Activated T-helper 1 cell treated with anti-CD3 and anti-CD28 coated beads, Interleukin-12 subunit alpha, Interleukin-12 subunit beta, Interleukin-2, Interleukin-4 antibody, amounts not matched to agents 30 ng/mL and 10 ng/mL and 1 ng/mL, durations not matched to agents 14 hours and 24 hours and 36 hours (primary cell): ENCODE measurements at regions of chr6 and their contacts with region 1.

Region 1: DNA sequence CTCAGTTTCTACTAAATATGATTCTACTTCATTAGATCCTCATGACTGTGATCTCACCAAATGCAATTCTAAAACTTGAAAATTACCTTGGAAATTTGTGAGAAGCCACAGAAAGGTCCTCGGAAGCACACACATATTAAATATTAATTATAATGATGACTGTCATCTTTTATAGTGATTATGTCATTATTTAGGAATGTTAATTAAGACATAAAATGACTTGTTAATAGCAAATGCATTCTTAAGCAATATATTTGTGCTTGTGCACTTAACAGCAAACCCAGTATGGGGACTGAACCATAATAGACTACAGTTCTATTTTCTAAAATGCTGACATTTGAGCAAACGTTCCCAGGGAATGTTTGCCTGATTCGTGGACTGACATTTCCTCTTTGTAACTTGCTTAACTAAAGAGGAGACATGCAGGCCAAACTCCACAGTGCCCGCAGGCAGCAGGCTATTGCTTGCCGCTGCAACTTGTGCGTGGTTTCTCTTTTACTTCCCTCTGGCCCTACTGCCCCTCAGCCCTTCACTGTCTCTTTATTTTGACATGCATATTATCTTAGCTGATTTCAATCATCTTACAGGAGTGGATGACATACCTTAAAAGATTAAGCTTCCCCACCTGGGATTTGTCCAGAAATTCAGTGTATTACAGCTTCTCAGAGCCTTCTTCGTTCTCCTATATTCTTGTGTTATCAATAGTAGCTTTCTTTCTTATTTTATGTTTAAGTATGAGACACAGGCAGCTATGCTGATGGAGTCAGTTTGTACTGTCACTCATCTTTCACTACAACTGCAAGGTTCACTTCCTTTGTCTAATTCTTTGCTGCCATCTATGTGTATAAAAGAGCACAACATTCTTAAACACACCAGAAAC is 141.5 kb downstream of the GMDS start:
- DNase-seq: no peak
- H3K4me3 Mint-ChIP-seq: no peak overlapping the region
- H3K27ac Mint-ChIP-seq: no peak overlapping the region
- H3K4me1 Mint-ChIP-seq: peaks cover 6% of the 10 kb centered on the region
- H3K27me3 Mint-ChIP-seq: peaks cover 2% of the 10 kb centered on the region

Region 2: DNA sequence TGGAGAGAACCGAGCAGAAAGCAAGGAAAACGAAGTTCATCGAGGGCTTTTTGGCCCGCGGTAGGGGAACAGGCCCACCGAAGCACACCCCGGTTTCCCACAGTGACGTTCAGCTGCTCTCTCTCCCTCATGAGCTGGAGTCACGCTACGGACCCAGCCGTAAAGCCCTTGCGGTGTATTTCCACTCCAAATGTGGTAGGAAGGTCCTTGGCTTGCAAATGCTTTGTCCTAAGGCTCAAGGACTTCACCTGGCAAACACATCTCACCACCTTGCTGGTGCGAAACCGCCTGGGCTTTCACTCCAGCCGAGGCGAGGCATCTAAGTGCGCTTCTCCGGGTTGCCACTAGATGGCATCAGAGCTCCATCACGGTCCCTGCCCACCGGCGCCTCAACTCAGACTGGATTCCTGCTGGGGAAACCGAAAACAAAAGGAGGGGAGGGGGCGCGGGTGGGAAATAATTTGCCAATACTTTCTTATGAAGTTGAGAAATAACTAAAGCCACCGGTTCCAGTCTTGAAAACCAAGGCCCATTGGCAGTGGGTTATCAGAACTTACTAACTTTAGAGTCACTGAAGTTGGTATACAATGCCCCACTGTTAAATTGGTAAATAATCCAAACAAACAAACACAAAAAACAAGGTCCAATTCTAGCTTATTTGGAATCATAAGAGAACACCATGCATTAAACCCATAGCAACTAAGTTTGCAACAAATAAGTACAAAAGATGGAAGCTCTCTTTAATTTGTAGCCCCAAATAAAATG is 507.6 kb before region 1 on chr6:
- intact Hi-C with region 1: loop called (anchors 2 kb)
- DNase-seq: peak; percentile 50
- H3K4me3 Mint-ChIP-seq: no peak overlapping the region
- H3K27ac Mint-ChIP-seq: no peak overlapping the region
- H3K4me1 Mint-ChIP-seq: peaks cover 4% of the 10 kb centered on the region
- H3K27me3 Mint-ChIP-seq: peaks cover 55% of the 10 kb centered on the region

Region 3: DNA sequence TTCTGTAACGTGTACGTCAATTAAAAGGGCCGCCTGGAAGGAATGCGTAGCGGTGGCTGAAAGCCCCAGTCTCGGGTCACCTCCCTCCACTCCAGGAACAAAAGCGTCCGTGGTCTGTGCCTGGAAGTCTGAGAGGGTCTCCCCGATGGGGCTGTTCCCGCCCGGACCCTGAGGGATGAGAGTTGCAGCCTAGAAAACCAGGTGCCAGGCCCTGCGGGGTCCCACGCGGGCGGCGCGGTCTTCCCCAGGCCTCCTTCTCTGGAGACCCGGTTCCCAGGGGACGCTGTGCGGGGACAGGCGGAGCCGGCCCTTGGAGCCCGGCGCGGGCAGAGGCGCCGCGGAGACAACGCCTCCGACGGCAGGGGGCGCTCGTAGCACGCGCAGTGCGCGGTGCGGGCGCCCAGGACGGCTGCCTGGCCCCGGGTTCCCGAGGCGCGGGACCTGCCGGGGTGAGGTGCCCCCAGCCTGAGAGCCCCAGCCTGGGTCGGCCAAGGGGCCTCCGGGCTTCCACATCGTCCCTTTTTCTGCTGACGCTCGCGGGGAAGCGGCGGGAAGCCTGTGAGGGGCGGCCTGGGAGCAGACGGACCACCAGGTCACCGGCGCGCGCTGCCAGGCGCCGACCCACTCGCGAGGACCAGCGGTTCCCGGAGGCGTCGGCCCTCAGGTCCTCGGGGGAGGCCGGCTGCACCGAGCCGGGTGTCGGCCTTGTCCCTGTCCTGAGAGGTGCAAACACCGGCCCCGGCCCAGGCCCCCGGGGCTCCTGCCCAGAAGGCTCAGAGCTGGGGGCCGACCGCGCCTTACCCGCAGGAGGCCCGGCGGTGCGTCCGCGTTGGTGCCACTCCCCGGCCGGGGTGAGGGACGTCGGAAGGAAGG is 499.5 kb before region 1 on chr6:
- intact Hi-C with region 1: loop called (anchors 1 kb)
- DNase-seq: peak; percentile 37
- H3K4me3 Mint-ChIP-seq: no peak overlapping the region
- H3K27ac Mint-ChIP-seq: no peak overlapping the region
- H3K4me1 Mint-ChIP-seq: peaks cover 13% of the 10 kb centered on the region
- H3K27me3 Mint-ChIP-seq: peaks cover 84% of the 10 kb centered on the region

Region 4: DNA sequence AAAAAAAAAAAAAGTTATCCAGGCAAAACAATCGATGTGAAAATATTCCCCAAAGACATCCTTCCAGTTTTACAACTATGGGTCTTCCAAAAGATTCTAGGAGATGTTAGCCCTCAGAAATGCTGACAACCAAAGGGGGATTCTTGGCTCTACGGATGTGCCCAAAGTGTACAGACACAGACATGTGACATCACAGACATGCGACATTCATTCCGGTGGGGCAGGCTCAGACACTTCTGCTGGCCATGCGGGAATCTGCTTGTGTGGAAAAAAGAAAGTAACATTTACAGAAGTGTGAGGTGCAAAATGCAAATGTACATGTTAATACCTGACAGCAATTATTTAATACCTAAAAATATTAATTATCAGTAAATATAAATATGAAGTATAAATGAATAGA is 225.6 kb before region 1 on chr6:
- intact Hi-C with region 1: no loop called
- DNase-seq: no peak
- H3K4me3 Mint-ChIP-seq: no peak overlapping the region
- H3K27ac Mint-ChIP-seq: no peak overlapping the region
- H3K4me1 Mint-ChIP-seq: no peaks in the 10 kb centered on the region
- H3K27me3 Mint-ChIP-seq: peaks cover 6% of the 10 kb centered on the region

Region 5: GRCh38 chr6:1893470-1894130 is 210.3 kb before region 1 on chr6:
- intact Hi-C with region 1: loop called (anchors 1 kb)
- DNase-seq: no peak
- H3K4me3 Mint-ChIP-seq: no peak overlapping the region
- H3K27ac Mint-ChIP-seq: no peak overlapping the region
- H3K4me1 Mint-ChIP-seq: peaks cover 12% of the 10 kb centered on the region
- H3K27me3 Mint-ChIP-seq: no peaks in the 10 kb centered on the region

Region 6: GRCh38 chr6:2376429-2377355 is 272.8 kb after region 1 on chr6:
- intact Hi-C with region 1: no loop called
- DNase-seq: no peak
- H3K4me3 Mint-ChIP-seq: no peak overlapping the region
- H3K27ac Mint-ChIP-seq: no peak overlapping the region
- H3K4me1 Mint-ChIP-seq: peaks cover 5% of the 10 kb centered on the region
- H3K27me3 Mint-ChIP-seq: no peaks in the 10 kb centered on the region

Region 7: DNA sequence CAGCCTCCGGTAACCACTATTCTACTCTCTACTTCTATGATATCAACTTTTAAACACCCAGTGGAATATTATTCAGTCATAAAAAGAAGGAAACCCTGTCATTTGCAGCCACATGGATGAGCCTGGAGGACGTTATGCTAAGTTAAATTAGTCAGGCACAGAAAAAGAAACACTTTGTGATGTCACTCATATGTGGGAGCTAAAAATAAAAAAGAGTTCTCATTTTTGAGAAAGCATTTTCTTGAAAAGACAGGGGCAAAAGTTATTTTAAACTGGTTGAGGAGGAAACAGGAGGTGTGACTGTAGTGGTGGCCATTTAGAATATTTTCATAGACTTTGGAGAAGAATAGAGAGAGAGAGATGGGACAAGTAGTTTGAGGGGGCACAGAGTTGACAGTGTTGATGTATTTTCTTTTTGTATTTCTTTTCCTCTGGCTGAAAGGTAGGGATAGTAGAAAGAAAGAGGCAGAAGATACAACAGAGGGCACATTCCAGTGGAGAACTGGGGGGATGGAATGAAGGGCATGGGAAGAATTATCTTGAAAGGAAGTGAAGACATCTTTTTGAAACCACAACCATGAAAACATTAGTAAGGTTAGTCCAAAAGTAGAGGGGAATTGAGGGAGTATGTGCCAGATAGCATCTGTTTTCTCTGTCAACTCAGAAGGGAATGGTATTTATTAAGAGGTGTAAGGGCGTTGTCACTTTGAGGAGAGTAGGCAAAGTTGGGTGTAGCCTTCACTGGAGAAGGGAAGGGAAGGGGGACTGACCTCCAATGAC is 322.9 kb after region 1 on chr6:
- intact Hi-C with region 1: no loop called
- DNase-seq: no peak
- H3K4me3 Mint-ChIP-seq: no peak overlapping the region
- H3K27ac Mint-ChIP-seq: no peak overlapping the region
- H3K4me1 Mint-ChIP-seq: no peaks in the 10 kb centered on the region
- H3K27me3 Mint-ChIP-seq: no peaks in the 10 kb centered on the region